Activated CD4-positive, alpha-beta memory T cell treated with anti-CD3 and anti-CD28 coated beads, Interleukin-2, amount 10 ng/mL, durations not matched to agents 7 days and 5 days (primary cell): ENCODE measurements at regions of chr17 and their contacts with region 1.

Region 1: GRCh38 chr17:74368092-74369081 is 1.1 kb downstream of the GPR142 start:
- DNase-seq: peak; percentile 78
- H3K4me3 Mint-ChIP-seq: peak overlapping the region; percentile 13
- H3K27ac Mint-ChIP-seq: no peak overlapping the region
- H3K4me1 Mint-ChIP-seq: peaks cover 15% of the 10 kb centered on the region
- H3K27me3 Mint-ChIP-seq: peaks cover 2% of the 10 kb centered on the region

Region 2: DNA sequence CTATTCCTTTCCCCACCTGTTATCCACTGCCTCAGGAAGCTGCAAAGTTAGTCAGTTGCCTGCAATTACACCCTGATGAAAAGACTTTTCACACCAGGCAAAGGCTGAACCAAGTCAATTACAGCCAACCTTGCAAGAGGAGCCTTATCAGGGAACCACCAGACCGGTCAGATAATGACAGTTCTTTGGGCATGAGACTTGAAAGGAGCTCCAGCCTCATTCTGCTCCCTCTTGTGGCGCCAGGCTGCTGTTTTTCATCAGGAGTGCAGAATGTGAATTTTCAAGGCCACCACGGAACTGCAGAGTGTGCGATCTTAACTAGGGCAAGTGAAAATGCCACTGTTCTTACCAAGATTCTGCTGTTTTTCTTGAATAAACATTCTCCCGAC is 71.8 kb before region 1 on chr17:
- CTCF ChIA-PET with region 1: interaction called, 42 read pairs
- POLR2A ChIA-PET with region 1: no interaction called
- DNase-seq: peak; percentile 69
- H3K4me3 Mint-ChIP-seq: no peak overlapping the region
- H3K27ac Mint-ChIP-seq: peak overlapping the region; percentile 44
- H3K4me1 Mint-ChIP-seq: peaks cover 30% of the 10 kb centered on the region
- H3K27me3 Mint-ChIP-seq: no peaks in the 10 kb centered on the region

Region 3: DNA sequence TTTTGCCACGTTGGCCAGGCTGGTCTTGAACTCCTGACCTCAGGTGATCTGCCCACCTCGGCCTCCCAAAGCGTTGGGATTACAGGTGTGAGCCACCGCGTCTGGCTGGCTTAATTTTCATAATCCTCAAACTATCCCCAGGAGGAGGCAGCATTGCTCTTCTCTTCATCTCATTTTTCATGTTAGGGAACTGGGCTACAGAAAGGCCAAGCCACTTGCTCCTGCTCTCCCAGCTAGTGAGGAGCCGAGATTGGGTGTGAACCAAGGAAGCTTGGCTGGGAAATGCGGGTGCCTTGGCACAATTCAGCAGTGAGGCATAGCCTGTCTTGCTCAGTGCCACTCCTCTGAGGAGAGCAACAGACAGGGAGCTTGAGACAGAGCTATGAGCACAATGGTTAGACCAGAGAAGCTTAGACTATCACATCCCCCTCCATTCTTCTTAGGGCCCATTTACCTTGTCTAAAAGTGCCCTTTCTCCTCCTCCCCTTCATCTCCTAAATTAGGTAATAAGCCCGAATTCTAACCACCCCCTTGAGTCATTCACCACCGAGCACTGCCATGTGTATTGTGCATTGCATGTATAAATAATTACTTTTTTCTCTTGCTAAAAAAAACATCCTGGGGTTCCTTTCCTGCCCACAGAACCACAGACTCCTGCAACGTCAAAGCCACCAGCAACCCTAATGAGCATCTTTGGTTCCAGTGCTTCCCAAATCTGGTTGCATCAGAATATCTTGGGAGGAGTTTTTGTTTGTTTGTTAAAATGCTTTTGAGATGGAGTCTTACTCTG is 62.3 kb before region 1 on chr17:
- CTCF ChIA-PET with region 1: interaction called, 42 read pairs
- POLR2A ChIA-PET with region 1: no interaction called
- DNase-seq: peak; percentile 40
- H3K4me3 Mint-ChIP-seq: no peak overlapping the region
- H3K27ac Mint-ChIP-seq: no peak overlapping the region
- H3K4me1 Mint-ChIP-seq: peaks cover 30% of the 10 kb centered on the region
- H3K27me3 Mint-ChIP-seq: peaks cover 4% of the 10 kb centered on the region

Region 4: GRCh38 chr17:74354123-74354522 is 14.3 kb before region 1 on chr17:
- CTCF ChIA-PET with region 1: interaction called, 39 read pairs
- POLR2A ChIA-PET with region 1: interaction called, 3 read pairs
- DNase-seq: peak; percentile 76
- H3K4me3 Mint-ChIP-seq: no peak overlapping the region
- H3K27ac Mint-ChIP-seq: no peak overlapping the region
- H3K4me1 Mint-ChIP-seq: peaks cover 7% of the 10 kb centered on the region
- H3K27me3 Mint-ChIP-seq: peaks cover 67% of the 10 kb centered on the region

Region 5: DNA sequence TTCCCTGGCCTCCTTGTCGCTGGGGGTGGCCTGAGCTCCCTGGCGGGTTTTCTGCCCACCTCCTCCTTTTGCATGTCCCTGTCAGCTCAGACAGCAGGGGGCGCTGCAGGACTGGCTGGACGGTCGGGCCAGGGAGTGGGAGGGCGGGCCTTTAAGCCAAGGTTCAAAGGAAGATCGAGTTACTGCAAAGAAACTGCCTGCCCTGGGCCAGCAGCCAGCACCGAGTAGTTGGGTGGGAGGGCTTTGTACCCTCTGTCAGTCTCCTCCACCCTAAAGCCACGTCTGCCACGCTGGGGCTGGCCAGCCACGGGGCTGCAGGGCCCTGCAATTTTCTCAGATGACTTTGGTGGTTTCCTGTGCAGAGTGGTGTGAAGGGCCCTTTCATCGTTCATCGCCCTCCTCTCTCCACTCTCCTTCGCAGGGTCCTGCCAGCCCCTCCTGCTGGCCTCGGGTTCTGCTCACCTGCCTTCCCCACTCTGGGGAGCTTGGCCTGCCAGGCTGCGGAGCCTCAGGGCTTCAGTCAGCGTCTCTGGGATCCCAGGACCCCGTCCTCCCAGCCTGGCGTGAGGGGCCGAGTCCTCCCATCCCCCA is 11.2 kb after region 1 on chr17:
- CTCF ChIA-PET with region 1: interaction called, 63 read pairs
- POLR2A ChIA-PET with region 1: interaction called, 10 read pairs
- DNase-seq: peak; percentile 93
- H3K4me3 Mint-ChIP-seq: no peak overlapping the region
- H3K27ac Mint-ChIP-seq: no peak overlapping the region
- H3K4me1 Mint-ChIP-seq: peaks cover 9% of the 10 kb centered on the region
- H3K27me3 Mint-ChIP-seq: peaks cover 12% of the 10 kb centered on the region

Region 6: DNA sequence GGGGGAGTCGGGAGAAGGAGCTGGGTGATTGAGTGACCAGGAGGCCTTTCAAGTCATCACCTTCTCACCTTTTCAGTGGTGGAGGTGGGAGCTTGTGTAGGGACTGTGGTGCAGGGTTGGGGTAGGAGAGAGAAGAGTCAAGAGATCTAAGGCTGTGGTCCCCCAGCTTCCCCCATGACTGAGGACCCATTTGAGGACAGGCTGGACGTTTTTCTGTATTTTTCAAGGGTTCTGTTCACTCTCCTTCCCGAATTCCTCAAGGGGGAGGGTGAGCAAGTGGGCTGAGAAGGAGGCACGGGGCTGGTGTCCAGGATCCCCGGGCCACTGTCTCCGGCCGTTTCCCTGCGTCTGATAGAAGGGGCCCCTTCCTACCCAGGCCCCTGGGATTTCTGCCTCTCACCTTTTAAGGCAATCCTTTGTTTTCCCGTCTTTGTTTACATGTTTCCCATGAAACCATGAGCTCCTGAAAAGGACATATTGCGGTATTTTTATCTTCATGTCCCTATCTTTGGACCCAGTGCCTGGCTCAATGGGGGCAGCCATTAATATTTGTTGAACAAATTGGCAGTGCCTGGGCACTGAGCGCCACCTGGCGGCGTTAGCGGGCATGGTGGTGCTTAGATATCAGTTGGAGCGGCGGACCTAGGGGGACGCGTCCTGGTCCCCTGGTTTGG is 88.9 kb after region 1 on chr17:
- CTCF ChIA-PET with region 1: interaction called, 77 read pairs
- POLR2A ChIA-PET with region 1: interaction called, 4 read pairs
- DNase-seq: peak; percentile 79
- H3K4me3 Mint-ChIP-seq: no peak overlapping the region
- H3K27ac Mint-ChIP-seq: peak overlapping the region; percentile 34
- H3K4me1 Mint-ChIP-seq: peaks cover 50% of the 10 kb centered on the region
- H3K27me3 Mint-ChIP-seq: peaks cover 21% of the 10 kb centered on the region

Region 7: DNA sequence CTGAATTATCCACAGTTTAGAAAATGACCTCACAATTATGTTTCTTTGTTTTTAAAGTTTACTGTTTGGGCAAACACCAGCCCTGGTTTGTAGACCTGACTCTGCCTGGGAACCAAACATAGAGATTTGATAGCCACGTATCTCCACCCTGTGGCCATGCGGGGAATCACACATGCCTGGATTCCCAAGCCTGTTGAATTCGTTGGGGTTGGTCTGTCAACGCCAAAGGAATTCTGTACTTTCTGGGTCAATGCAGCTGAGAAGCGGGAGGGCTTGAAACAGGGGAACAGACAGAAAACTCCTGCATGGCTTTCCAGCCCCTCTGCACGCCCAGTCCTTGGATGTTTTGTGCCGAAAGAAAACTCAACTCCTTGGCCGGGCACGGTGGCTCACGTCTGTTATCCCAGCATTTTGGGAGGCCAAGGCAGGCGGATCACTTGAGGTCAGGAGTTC is 125.0 kb after region 1 on chr17:
- CTCF ChIA-PET with region 1: interaction called, 28 read pairs
- POLR2A ChIA-PET with region 1: interaction called, 3 read pairs
- DNase-seq: peak; percentile 75
- H3K4me3 Mint-ChIP-seq: no peak overlapping the region
- H3K27ac Mint-ChIP-seq: no peak overlapping the region
- H3K4me1 Mint-ChIP-seq: peaks cover 22% of the 10 kb centered on the region
- H3K27me3 Mint-ChIP-seq: peaks cover 15% of the 10 kb centered on the region